Psoas muscle (tissue), 8 donors: ENCODE measurements at regions of chr9 and their contacts with region 1.

Region 1: GRCh38 chr9:95004411-95005277 is 278.1 kb downstream of the AOPEP start:
- DNase-seq: peak; percentile 61 to 75
- ATAC-seq: peak; percentile 19 to 55 (median 44)
- H3K4me3 ChIP-seq: peak overlapping the region; percentile 86
- H3K27ac ChIP-seq: peak overlapping the region; percentile 93
- H3K4me1 ChIP-seq: peaks cover 16% of the 10 kb centered on the region
- H3K27me3 ChIP-seq: no peaks in the 10 kb centered on the region
- CTCF ChIP-seq: no peak

Region 2: DNA sequence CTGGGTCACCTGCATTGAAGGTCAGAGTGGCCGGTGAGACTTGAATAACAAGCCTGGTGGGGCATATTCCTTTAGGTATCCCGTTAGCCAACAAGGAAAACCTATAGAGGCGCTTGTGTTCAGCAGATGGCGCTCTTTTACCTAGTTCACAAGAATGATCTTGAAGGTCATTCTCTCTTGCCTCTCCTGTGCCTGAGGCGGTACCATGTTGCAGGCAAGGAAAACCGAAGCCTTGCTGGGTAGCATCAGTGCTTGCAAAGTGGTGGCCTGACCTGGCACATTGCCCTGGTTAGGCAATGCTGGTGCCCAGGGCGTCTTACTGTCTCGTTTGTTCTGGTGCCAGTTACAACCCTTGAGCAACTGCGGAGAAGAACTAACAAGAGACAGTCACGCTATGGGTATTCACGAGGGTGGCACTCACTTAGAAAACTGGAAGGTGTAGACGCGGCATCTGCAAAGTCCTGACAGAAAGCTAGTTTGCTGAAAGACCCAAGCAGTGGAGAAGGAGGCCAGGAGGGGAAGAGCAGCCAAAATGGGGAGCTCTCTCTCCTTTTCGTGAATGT is 221.5 kb before region 1 on chr9:
- intact Hi-C with region 1: loop called (anchors 1 to 10 kb)
- DNase-seq: peak; percentile 88 to 95
- ATAC-seq: peak; percentile 92 to 97 (median 94)
- H3K4me3 ChIP-seq: no peak overlapping the region
- H3K27ac ChIP-seq: peak overlapping the region; percentile 65
- H3K4me1 ChIP-seq: peaks cover 27% of the 10 kb centered on the region
- H3K27me3 ChIP-seq: no peaks in the 10 kb centered on the region
- CTCF ChIP-seq: peak; percentile 76

Region 3: DNA sequence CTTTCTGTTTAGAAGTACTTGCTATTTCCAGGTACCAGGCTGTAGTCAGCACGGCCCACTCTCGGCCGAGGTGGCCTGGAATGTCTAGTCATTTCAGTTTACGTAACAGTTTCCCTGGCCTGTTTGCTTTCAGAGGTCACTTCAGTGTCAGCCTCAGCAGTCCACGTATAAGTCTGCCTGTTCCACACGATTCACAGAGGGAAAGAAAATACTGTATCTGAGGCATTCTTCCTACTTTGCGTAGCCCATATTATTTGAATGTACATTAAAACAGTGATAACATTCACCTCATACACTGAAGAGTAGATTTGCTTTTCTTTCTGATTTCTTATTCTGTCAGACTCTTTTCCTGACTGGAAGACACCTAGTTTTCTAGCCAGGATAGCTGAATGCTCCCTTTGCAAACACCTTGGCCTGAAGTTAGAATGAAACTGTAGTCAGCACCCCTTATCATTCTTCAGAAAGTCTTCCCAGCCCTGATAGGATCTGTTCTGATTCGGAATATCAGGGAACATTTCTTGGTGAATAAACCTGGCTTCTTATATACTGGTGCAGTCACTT is 137.3 kb before region 1 on chr9:
- intact Hi-C with region 1: loop called (anchors 2 to 5 kb)
- DNase-seq: peak; percentile 56 to 70
- ATAC-seq: peak; percentile 73 to 79 (median 75)
- H3K4me3 ChIP-seq: peak overlapping the region; percentile 32
- H3K27ac ChIP-seq: peak overlapping the region; percentile 93
- H3K4me1 ChIP-seq: peaks cover 81% of the 10 kb centered on the region
- H3K27me3 ChIP-seq: no peaks in the 10 kb centered on the region
- CTCF ChIP-seq: no peak

Region 4: GRCh38 chr9:94928691-94929372 is 75.8 kb before region 1 on chr9:
- intact Hi-C with region 1: no loop called
- DNase-seq: no peak
- ATAC-seq: peak in 1 of 4 donors; percentile 12
- H3K4me3 ChIP-seq: no peak overlapping the region
- H3K27ac ChIP-seq: peak overlapping the region; percentile 58
- H3K4me1 ChIP-seq: peaks cover under 1% of the 10 kb centered on the region
- H3K27me3 ChIP-seq: no peaks in the 10 kb centered on the region
- CTCF ChIP-seq: no peak

Region 5: GRCh38 chr9:95025213-95026147 is 20.8 kb after region 1 on chr9:
- intact Hi-C with region 1: loop called in 1 of 2 experiments (anchors 2 kb)
- DNase-seq: peak; percentile 68 to 83
- ATAC-seq: peak; percentile 75 to 84 (median 82)
- H3K4me3 ChIP-seq: peak overlapping the region; percentile 24
- H3K27ac ChIP-seq: peak overlapping the region; percentile 93
- H3K4me1 ChIP-seq: peaks cover 100% of the 10 kb centered on the region
- H3K27me3 ChIP-seq: no peaks in the 10 kb centered on the region
- CTCF ChIP-seq: peak; percentile 45

Region 6: GRCh38 chr9:95048225-95049087 is 43.8 kb after region 1 on chr9:
- intact Hi-C with region 1: loop called (anchors 2 to 5 kb)
- DNase-seq: peak; percentile 69 to 78
- ATAC-seq: peak; percentile 73 to 83 (median 76)
- H3K4me3 ChIP-seq: peak overlapping the region; percentile 74
- H3K27ac ChIP-seq: peak overlapping the region; percentile 93
- H3K4me1 ChIP-seq: peaks cover 69% of the 10 kb centered on the region
- H3K27me3 ChIP-seq: no peaks in the 10 kb centered on the region
- CTCF ChIP-seq: no peak

Region 7: GRCh38 chr9:95092262-95093072 is 87.8 kb after region 1 on chr9:
- intact Hi-C with region 1: loop called in 1 of 2 experiments (anchors 5 kb)
- DNase-seq: no peak
- ATAC-seq: peak; percentile 8 to 27 (median 14)
- H3K4me3 ChIP-seq: no peak overlapping the region
- H3K27ac ChIP-seq: peak overlapping the region; percentile 89
- H3K4me1 ChIP-seq: peaks cover 74% of the 10 kb centered on the region
- H3K27me3 ChIP-seq: no peaks in the 10 kb centered on the region
- CTCF ChIP-seq: no peak